Activated B cell treated with CpG ODN at 0.5 μM for 24 hours (primary cell): ENCODE measurements at regions of chr7 and their contacts with region 1.

Region 1: GRCh38 chr7:102321351-102322177 is 34.7 kb downstream of the SPDYE6 start:
- DNase-seq: peak; percentile 45
- ATAC-seq: peak; percentile 86
- H3K4me3 Mint-ChIP-seq: no peak overlapping the region
- H3K27ac Mint-ChIP-seq: no peak overlapping the region
- H3K4me1 Mint-ChIP-seq: peaks cover 34% of the 10 kb centered on the region
- H3K27me3 Mint-ChIP-seq: no peaks in the 10 kb centered on the region
- CTCF ChIP-seq: no peak

Region 2: DNA sequence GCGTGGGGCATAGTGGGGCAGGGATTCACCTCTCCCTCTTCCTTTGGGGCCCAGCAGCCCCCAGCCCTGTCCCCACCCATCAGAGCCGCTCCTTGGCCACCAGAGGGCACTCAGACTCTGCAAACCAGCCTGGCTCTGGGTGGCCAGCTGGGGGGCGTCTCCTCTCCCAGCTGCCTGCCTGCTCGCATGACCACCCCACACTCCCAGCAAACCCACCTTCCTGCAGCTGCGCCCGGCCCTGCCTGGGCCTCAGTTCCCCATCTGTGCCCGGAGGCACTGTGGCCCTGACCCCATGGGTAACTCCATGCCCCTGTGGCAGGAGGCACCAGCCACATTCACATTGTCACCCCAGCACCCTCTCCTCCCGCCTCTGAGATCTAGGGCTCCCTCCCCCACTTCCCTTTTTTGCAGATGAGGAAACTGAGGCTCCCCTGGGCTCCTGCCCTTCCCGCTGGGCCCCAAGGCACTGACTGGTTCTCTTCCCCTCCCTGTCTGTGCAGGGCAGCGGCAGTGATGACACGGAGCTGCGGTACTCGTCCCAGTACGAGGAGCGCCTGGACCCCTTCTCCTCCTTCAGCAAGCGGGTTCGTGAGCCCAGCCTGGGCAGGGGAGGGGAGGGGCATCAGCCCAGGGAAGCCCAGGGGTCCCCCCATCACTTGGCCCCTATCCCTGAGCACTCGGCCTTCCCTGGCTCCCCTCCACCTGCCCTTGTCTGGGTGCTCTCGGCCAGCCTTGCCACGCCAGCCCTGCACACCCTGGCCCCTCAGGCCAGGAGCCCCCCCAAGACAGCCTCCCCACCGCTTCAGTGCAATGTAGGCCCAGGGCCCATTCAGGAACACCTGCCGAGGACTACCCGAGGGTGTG is 41.8 kb before region 1 on chr7:
- CTCF ChIA-PET with region 1: interaction called, 5 read pairs
- POLR2A ChIA-PET with region 1: no interaction called
- intact Hi-C with region 1: loop called (anchors 1 kb)
- DNase-seq: peak; percentile 65
- ATAC-seq: peak; percentile 94
- H3K4me3 Mint-ChIP-seq: peak overlapping the region; percentile 71
- H3K27ac Mint-ChIP-seq: peak overlapping the region; percentile 76
- H3K4me1 Mint-ChIP-seq: peaks cover 36% of the 10 kb centered on the region
- H3K27me3 Mint-ChIP-seq: no peaks in the 10 kb centered on the region
- CTCF ChIP-seq: peak; percentile 24

Region 3: DNA sequence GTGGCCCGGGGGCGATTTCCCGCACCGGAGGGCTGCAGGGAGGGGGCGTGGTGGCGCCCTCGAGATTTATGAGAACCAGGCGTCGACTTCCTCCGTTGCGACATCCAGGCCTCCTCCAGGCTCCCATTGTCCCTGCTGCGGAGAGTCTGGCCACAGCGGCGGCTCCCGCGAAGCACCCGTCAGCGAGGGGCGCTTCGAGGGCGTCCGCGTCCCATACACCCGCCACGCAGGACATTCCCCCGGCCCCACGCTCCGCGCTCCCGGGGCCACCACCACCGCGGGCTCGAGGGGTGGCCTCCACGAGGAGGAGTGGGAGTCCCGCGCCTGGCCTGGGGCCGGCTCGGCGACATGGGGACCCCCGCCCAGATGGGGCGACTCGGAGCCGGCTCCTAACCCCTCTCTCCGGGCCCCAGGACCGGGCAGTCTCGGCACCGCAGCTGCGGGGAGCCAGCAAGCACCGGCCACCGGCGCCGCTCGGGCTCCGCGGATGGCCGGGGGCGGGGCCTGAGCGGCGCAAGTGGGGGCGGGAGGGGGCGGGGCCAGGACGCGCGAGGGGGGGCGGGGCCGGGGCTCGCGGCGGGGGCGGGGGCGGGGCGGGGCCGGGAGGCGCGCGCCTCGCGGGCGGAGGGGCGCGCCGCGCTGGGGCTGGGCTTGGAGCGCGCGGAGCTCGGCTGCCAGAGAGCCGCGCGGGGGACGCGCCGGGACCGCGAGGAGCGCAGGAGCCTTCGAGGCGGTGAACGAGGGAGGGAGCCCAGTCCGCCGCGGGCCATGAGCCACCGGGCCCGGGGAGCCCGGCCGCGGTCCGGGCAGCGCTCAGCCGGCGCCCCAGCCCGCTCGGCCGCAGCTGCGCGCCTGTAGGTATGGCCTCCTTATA is 35.1 kb before region 1 on chr7 and contains the start of gene SH2B2:
- CTCF ChIA-PET with region 1: interaction called, 4 read pairs
- POLR2A ChIA-PET with region 1: interaction called, 10 read pairs
- intact Hi-C with region 1: loop called (anchors 1 kb)
- DNase-seq: peak; percentile 83
- ATAC-seq: peak; percentile 38
- H3K4me3 Mint-ChIP-seq: peak within 1 kb of the TSS; percentile 83
- H3K27ac Mint-ChIP-seq: peak within 1 kb of the TSS; percentile 53
- H3K4me1 Mint-ChIP-seq: peaks cover 64% of the 10 kb centered on the region
- H3K27me3 Mint-ChIP-seq: no peaks in the 10 kb centered on the region
- CTCF ChIP-seq: no peak
- total RNA-seq, gene SH2B2: 28.2 and 32.1 TPM in 2 replicates

Region 4: DNA sequence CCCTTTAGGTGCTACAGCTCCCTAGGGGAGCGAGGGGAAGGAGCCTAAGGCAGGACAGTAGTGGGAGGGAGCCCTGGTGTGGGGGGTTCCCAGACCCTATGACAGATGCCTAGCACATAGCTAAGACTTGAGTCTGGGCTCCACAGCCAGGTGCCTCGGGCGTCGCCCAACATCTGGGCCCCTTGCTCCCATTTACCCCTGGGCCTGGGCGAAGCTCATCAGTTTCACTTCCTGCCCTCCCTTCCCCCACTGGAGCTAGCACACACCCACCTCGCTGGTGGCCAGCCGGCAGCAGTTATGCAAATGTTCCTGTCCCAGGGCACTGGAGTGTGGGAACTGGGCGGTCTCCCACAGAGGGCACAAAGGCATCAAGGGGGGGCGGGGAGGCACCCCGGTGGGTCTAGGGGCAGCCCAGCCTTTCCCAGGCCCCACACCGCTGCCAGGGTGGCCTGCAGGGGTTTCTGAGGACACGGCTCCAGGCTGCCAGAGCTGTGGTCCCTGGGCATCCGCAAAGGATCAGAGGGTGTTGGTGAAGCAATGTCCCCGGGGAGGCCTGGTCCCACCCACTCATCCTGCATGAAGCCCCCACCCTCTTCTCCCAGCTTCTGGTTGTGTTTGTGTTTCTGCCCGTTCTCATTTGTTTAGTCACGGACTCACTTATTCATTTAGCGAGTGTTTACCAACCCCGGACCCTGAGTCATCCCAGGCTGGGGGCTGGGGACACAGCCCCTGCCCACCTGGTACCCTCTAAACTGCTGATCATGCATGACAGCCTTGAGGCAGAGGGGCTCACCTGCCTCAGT is 14.5 kb before region 1 on chr7:
- CTCF ChIA-PET with region 1: no interaction called
- POLR2A ChIA-PET with region 1: interaction called, 6 read pairs
- intact Hi-C with region 1: loop called (anchors 2 kb)
- DNase-seq: peak; percentile 80
- ATAC-seq: peak; percentile 88
- H3K4me3 Mint-ChIP-seq: peak overlapping the region; percentile 74
- H3K27ac Mint-ChIP-seq: peak overlapping the region; percentile 92
- H3K4me1 Mint-ChIP-seq: peaks cover 85% of the 10 kb centered on the region
- H3K27me3 Mint-ChIP-seq: no peaks in the 10 kb centered on the region
- CTCF ChIP-seq: no peak

Region 5: DNA sequence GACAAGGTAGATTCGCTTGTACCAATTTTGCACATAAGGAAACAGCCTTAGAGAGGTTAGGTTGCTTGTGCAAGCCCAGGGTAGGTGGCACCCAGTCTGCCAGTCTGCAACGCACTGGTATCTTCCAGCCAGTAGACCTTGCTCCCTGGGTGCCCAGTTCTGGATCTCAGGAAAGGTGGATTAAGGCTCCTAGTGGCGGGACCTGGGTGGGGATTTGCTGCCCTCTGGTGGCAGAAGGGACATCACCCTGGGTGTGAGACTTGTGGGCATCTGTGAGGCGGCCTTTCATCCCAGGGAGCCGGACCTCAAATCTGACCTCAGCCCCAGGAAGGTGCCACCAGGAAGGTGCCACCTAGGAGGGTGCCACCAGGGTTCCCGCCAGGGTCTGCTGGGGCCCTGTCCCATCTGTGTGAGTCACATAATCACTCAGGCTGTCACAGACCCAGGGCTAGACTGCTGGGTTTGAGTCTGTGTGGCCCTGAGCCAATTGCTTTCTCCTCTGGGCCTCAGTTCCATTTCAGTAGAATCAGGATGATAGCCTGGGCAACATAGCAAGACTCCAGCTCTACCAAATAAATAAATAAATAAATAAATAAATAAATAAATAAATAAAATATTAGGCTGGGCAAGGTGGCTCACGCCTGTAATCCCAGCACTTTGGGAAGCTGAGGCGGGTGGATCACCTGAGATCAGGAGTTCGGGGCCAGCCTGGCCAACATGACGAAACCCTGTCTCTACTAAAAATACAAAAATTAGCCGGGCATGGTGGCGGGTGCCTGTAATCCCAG is 69.3 kb after region 1 on chr7:
- CTCF ChIA-PET with region 1: interaction called, 6 read pairs
- POLR2A ChIA-PET with region 1: no interaction called
- intact Hi-C with region 1: loop called (anchors 5 kb)
- DNase-seq: peak; percentile 69
- ATAC-seq: peak; percentile 74
- H3K4me3 Mint-ChIP-seq: no peak overlapping the region
- H3K27ac Mint-ChIP-seq: no peak overlapping the region
- H3K4me1 Mint-ChIP-seq: peaks cover 14% of the 10 kb centered on the region
- H3K27me3 Mint-ChIP-seq: no peaks in the 10 kb centered on the region
- CTCF ChIP-seq: no peak